ENCODE measurements at regions of chr6 and their contacts with region 1.

Region 1: DNA sequence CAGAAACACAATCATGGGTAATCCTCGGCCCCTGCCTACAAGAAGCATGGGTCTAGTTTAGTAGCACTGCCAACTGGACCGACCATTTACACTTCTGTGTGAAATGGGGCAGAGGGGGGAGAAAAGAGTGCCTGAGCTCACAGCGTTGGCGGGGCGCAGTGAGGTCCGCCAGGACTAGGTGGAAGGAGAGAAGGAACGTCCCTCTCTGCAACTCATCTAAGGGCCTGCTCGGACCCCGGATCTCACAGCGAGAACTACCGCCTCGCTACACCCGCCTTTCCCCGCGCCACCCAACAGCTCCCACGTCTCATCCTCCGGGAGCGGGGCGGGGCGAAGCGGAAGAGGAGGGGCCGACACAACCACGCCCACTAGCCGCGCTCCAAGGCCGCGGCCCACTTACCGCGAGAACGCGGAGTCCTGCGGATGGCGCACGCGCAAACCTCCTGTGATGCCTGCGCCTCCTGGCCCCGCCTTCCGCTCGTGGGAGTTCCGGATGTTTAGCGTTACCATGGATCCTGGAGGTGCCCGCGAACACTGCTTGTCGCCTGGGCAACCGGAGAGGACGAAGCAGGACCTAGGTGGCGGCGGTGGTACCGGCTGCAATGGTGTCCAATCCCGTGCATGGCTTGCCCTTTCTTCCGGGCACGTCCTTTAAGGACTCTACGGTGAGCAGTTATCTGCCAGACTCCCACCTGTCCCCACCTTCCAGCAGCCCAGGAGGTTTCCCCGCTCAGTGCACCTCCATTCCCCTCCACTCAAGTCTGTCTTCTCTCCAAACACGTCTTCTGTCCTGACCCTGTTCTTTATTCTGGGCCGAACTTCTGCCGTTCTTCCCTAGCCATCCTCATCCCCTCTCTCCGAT is at the start of gene EFHC1:
- DNase-seq: peak; percentile 99
- ATAC-seq: peak; percentile 81
- H3K4me3 ChIP-seq: peak within 1 kb of the TSS; percentile 78
- H3K27ac ChIP-seq: peak within 1 kb of the TSS; percentile 39
- H3K4me1 ChIP-seq: peaks cover 62% of the 10 kb centered on the region
- H3K27me3 ChIP-seq: no peaks in the 10 kb centered on the region
- CTCF ChIP-seq: no peak
- total RNA-seq, gene EFHC1: 14.5 and 22.4 TPM in 2 replicates

Region 2: GRCh38 chr6:52503848-52504781 is 84.1 kb after region 1 on chr6:
- CTCF ChIA-PET with region 1: interaction called, 3 read pairs
- POLR2A ChIA-PET with region 1: interaction called, 21 read pairs
- intact Hi-C with region 1: loop called (anchors 1 kb)
- DNase-seq: peak; percentile 99
- ATAC-seq: peak; percentile 77
- H3K4me3 ChIP-seq: peak overlapping the region; percentile 46; the same call in 1 of the 2 replicates
- H3K27ac ChIP-seq: peak overlapping the region; percentile 65
- H3K4me1 ChIP-seq: peaks cover 34% of the 10 kb centered on the region
- H3K27me3 ChIP-seq: no peaks in the 10 kb centered on the region
- CTCF ChIP-seq: no peak

Region 3: DNA sequence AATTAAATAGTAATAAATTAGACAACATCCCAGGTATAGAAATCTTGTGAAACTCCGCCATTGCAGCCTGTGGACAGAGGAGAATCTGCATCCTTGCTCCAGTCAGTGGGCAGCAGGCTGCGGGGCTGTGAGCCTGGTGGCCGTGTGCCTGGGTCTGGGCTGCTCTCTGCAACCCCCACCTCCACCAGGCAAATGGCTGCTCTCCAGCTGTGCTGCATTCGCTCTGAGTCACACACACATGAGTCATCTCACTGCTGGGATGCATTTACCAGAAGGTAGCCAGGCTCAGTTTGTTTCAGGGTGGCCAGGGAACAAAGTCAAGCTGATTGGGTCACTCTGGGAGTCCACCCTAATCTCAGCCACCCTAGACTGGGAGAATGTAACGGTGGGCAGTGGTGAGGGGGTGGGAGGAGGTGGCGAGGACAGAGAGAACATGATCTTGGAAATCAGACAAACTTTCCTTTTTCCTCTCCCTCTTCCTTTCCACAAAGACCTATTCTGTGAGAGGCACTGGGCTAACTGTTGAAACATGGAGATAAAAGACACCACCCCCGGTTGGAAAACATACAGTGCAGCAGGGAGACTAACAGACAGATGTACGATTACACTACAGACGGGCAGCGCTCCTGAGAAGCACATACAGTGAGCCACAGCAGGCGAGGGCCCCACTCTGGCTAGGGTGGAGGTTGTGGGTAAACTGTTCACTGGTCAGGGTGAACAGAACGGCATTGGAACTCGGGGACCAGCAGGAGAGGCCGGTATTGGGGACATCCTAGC is 97.7 kb after region 1 on chr6:
- CTCF ChIA-PET with region 1: no interaction called
- POLR2A ChIA-PET with region 1: no interaction called
- intact Hi-C with region 1: loop called (anchors 5 kb)
- DNase-seq: peak; percentile 92
- ATAC-seq: peak; percentile 90
- H3K4me3 ChIP-seq: peak overlapping the region; percentile 9; the same call in 1 of the 2 replicates
- H3K27ac ChIP-seq: peak overlapping the region; percentile 64
- H3K4me1 ChIP-seq: peaks cover 42% of the 10 kb centered on the region
- H3K27me3 ChIP-seq: no peaks in the 10 kb centered on the region
- CTCF ChIP-seq: no peak

Region 4: GRCh38 chr6:52552278-52552643 is 132.2 kb after region 1 on chr6:
- CTCF ChIA-PET with region 1: no interaction called
- POLR2A ChIA-PET with region 1: no interaction called
- intact Hi-C with region 1: no loop called
- DNase-seq: no peak
- ATAC-seq: peak; percentile 22
- H3K4me3 ChIP-seq: no peak overlapping the region
- H3K27ac ChIP-seq: no peak overlapping the region
- H3K4me1 ChIP-seq: peaks cover 31% of the 10 kb centered on the region
- H3K27me3 ChIP-seq: no peaks in the 10 kb centered on the region
- CTCF ChIP-seq: no peak

Region 5: DNA sequence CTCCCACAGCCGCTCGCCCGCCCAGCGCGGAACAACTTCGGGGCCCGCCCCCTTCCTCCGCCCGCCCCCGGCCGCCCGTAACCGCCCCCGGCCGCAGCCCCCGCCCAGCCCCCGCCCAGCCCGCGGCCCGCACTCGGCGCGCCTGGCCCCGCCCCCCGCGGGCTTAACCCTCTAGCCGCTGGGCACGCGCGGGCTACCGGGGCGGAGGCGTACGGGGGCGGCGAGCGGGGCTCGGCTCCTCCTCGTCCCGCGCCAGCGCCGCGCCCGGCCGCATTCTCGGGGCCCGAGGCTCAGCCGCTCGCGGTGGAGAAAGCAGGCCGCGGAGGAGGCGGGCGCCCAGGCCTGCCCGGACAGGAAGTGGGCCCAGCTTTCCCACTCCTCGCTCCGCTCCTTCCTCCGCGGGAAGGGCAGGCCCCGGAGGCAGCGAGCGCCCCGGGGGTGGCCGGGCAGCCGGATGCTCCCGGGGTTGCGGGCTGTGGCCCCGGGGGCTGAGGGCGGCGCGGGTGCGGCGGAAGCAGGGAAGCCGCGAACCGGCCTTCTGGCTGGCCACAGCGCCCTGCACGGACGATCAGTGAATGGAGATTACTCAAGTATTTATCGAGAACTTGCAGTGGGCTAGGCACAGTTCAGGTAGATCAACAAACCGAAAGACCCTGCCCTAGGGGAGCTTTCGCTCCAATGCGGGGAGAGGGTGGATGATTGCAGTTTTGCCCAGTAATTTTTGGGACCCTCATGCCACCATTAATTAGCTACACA is 157.2 kb after region 1 on chr6 and contains the start of gene TRAM2:
- CTCF ChIA-PET with region 1: interaction called, 3 read pairs
- POLR2A ChIA-PET with region 1: no interaction called
- intact Hi-C with region 1: loop called (anchors 1 kb)
- DNase-seq: peak; percentile 81
- ATAC-seq: peak; percentile 80
- H3K4me3 ChIP-seq: peak within 1 kb of the TSS; percentile 87
- H3K27ac ChIP-seq: peak within 1 kb of the TSS; percentile 64
- H3K4me1 ChIP-seq: peaks cover 33% of the 10 kb centered on the region
- H3K27me3 ChIP-seq: no peaks in the 10 kb centered on the region
- CTCF ChIP-seq: peak; percentile 29; the same call in 1 of the 2 replicates
- total RNA-seq, gene TRAM2: 17.7 and 19.6 TPM in 2 replicates

Region 6: DNA sequence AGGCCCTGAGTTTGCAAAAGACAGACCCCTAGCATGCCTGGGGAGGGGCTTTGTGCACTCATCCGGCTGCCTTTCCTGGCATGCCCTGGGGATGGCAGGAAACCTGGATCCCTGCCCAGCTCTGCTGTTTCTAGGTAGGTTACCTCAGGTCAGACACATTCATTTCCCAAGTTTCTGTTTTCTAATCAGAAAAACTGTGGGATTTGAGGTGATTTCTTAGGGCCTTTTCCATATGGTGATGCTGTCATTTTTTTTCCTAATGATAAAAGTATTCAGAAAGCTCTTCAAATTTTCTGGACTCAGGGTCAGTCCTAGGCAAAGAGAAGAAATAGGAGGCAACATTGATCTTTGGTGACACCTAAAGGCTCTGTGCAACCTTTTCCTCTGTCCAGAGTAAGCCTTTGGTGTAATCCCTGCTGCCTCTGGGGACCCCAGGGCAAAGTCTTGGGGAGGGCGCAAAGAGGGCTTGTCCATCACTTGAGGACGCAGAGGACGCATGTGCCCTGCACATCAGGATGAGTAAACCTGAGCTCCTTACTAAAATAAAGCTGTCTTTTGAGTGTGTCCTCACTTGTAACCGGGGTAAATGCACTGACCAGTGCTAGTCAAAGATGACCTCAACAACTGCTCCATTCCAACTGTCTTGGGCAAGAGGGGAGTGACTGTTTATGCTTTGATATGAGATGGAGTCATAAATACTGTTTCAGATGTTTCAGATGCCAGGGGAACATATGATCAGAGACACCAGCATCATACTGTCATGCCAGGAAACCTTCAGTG is 170.3 kb after region 1 on chr6:
- CTCF ChIA-PET with region 1: no interaction called
- POLR2A ChIA-PET with region 1: no interaction called
- intact Hi-C with region 1: loop called (anchors 2 kb)
- DNase-seq: peak; percentile 36
- ATAC-seq: peak; percentile 63
- H3K4me3 ChIP-seq: no peak overlapping the region
- H3K27ac ChIP-seq: no peak overlapping the region
- H3K4me1 ChIP-seq: peaks cover 13% of the 10 kb centered on the region; the same call in 1 of the 2 replicates
- H3K27me3 ChIP-seq: no peaks in the 10 kb centered on the region
- CTCF ChIP-seq: 0 out of 2 replicates have a peak, but pooled peaks have one; percentile 38

Region 7: GRCh38 chr6:52712136-52712535 is 292.1 kb after region 1 on chr6:
- CTCF ChIA-PET with region 1: no interaction called
- POLR2A ChIA-PET with region 1: no interaction called
- intact Hi-C with region 1: no loop called
- DNase-seq: peak; percentile 49
- ATAC-seq: peak; percentile 87
- H3K4me3 ChIP-seq: no peak overlapping the region
- H3K27ac ChIP-seq: no peak overlapping the region
- H3K4me1 ChIP-seq: no peaks in the 10 kb centered on the region; the same call in 1 of the 2 replicates
- H3K27me3 ChIP-seq: no peaks in the 10 kb centered on the region
- CTCF ChIP-seq: no peak

Region 8: GRCh38 chr6:53398247-53399026 is 978.4 kb after region 1 on chr6:
- CTCF ChIA-PET with region 1: no interaction called
- POLR2A ChIA-PET with region 1: no interaction called
- intact Hi-C with region 1: no loop called
- DNase-seq: peak; percentile 46
- ATAC-seq: peak; percentile 56
- H3K4me3 ChIP-seq: peak overlapping the region; percentile 46
- H3K27ac ChIP-seq: peak overlapping the region; percentile 80
- H3K4me1 ChIP-seq: peaks cover 28% of the 10 kb centered on the region
- H3K27me3 ChIP-seq: no peaks in the 10 kb centered on the region
- CTCF ChIP-seq: no peak

Measured in PC-3 (cell line).